ENCODE measurements at regions of chr7 and their contacts with region 1.

Region 1: GRCh38 chr7:14414274-14414986 is 425.0 kb upstream of the ETV1 start:
- DNase-seq: peak in 2 of 5 donors; percentile 29 to 50
- ATAC-seq: peak; percentile 94 to 98 (median 96)
- H3K4me3 ChIP-seq: no peak overlapping the region
- H3K27ac ChIP-seq: peak overlapping the region; percentile 27 to 92 (median 79)
- H3K4me1 ChIP-seq: peaks cover 0 to 8% (median 0%) of the 10 kb centered on the region in 12 donors
- H3K27me3 ChIP-seq: no peaks in the 10 kb centered on the region
- CTCF ChIP-seq: no peak
- POLR2A ChIP-seq: no peak

Region 2: DNA sequence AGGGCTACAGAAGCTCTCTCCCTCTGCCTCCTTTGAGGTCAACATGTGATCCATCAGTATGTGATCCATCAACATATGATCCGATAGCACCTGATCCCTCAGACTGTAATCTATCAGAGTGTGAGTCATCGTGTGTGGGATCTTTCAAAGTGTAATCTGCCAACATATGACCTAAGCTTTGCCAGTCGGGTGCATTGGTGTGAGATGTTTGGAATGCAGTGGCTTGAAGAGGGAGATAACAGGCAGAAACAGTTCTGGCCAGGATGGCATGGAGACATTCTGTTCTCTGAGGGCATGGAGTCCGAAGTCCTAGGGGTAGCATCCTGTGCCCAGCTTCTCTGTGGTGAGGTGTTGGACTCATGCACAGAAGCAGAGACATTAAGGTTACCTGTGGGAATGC is 207.3 kb before region 1 on chr7:
- intact Hi-C with region 1: loop called in 2 of 10 experiments (anchors 5 to 10 kb)
- DNase-seq: peak in 4 of 5 donors; percentile 11 to 57 (median 25)
- ATAC-seq: peak; percentile 90 to 97 (median 96)
- H3K4me3 ChIP-seq: no peak overlapping the region
- H3K27ac ChIP-seq: peak overlapping the region in 5 of 12 donors; percentile 5 to 77 (median 63)
- H3K4me1 ChIP-seq: peaks cover 0 to 10% (median 0%) of the 10 kb centered on the region in 12 donors
- H3K27me3 ChIP-seq: no peaks in the 10 kb centered on the region
- CTCF ChIP-seq: no peak
- POLR2A ChIP-seq: no peak

Region 3: GRCh38 chr7:14340393-14341074 is 73.9 kb before region 1 on chr7:
- intact Hi-C with region 1: loop called in 2 of 10 experiments (anchors 5 to 10 kb)
- DNase-seq: no peak
- ATAC-seq: no peak
- H3K4me3 ChIP-seq: no peak overlapping the region
- H3K27ac ChIP-seq: no peak overlapping the region
- H3K4me1 ChIP-seq: peaks cover 0 to 5% (median 0%) of the 10 kb centered on the region in 12 donors
- H3K27me3 ChIP-seq: no peaks in the 10 kb centered on the region
- CTCF ChIP-seq: no peak
- POLR2A ChIP-seq: no peak